ENCODE measurements at regions of chr5 and their contacts with region 1.

Region 1: DNA sequence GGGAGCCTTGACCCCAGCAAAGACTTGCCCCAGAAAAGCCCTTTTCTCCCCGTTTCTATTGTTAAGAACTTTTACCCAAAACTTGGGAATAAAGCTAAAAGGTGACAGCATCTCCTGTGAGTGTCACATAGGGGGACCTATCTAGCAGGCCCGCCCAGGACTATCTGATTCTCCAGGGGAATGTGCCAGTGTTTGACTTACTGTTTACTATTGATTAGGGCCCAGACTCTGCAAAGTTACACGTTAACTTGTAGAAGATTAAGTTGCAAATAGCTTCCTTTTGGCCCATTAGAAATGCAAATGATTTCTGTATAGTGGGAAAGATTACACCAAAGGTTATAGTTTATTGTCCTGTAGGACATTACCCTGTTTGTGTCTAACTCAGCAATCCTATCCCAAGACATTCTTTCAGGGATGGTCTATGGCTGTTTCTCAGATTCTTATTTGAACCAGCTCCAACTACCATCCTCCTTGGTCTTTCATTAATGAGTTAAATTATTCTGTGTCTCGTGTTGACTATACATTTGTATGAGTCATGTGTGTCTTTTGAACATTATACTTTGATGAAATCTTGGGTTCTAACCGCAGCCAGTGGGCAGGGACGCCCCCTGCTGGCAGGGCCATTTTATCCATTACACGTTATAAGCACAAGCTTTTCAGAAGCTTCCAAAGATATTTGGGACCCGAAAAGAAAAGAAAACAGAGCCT is 60.7 kb downstream of the HRH2 start:
- DNase-seq: peak in 4 of 7 donors; percentile 38 to 81 (median 64)
- H3K4me3 ChIP-seq: no peak overlapping the region
- H3K27ac ChIP-seq: no peak overlapping the region
- H3K4me1 ChIP-seq: no peaks in the 10 kb centered on the region
- H3K27me3 ChIP-seq: no peaks in the 10 kb centered on the region
- CTCF ChIP-seq: peak; percentile 35 to 68 (median 62)
- POLR2A ChIP-seq: no peak

Region 2: GRCh38 chr5:175534070-175534932 is 184.3 kb before region 1 on chr5:
- intact Hi-C with region 1: loop called (anchors 2 to 5 kb)
- DNase-seq: peak; percentile 73 to 92 (median 78)
- H3K4me3 ChIP-seq: no peak overlapping the region
- H3K27ac ChIP-seq: no peak overlapping the region
- H3K4me1 ChIP-seq: no peaks in the 10 kb centered on the region
- H3K27me3 ChIP-seq: peaks cover 4% of the 10 kb centered on the region
- CTCF ChIP-seq: peak; percentile 90 to 99 (median 98)
- POLR2A ChIP-seq: no peak

Measured in adrenal gland (tissue), 19 donors.